Heart right ventricle (tissue), 16 donors: ENCODE measurements at regions of chr4 and their contacts with region 1.

Region 1: DNA sequence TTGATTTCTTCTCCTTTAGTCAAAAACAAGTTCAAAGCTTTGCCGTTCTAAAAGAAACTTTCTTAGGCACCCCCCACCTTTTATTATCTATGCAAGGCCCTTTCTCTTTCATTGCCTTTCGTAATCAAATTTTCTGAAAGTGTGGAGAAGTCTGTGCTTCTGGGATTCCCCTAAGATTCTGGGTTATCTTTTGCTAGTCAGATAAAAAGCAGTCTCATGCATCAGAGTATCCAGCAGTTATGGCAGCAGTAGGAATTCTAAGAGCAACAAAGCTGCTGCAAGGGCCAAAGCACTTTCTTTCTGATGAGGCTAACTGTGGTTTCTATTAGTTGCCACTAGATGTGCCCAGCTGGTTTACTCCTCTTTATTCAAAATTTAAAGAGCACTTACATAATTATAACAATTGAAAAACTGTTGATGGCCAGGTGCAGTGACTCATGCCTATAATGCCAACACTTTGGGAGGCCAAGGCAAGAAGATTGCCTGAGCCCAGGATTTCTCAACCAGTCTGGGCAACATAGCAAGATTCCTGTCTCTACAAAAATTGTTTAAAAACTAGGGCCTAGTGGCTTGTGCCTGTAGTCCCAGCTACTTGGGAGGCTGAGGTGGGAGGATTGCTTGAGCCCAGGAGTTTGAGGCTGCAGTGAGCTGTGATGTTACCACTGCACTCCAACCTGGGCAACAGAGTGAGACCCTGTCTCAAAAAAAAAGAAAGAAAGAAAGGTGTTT is 296.2 kb downstream of the PAPSS1 start:
- DNase-seq: no peak
- ATAC-seq: no peak
- H3K4me3 ChIP-seq: no peak overlapping the region
- H3K27ac ChIP-seq: no peak overlapping the region
- H3K4me1 ChIP-seq: no peaks in the 10 kb centered on the region
- H3K27me3 ChIP-seq: no peaks in the 10 kb centered on the region
- CTCF ChIP-seq: no peak

Region 2: GRCh38 chr4:107006218-107006617 is 417.6 kb before region 1 on chr4:
- intact Hi-C with region 1: no loop called
- DNase-seq: no peak
- ATAC-seq: no peak
- H3K4me3 ChIP-seq: no peak overlapping the region
- H3K27ac ChIP-seq: no peak overlapping the region
- H3K4me1 ChIP-seq: no peaks in the 10 kb centered on the region
- H3K27me3 ChIP-seq: no peaks in the 10 kb centered on the region
- CTCF ChIP-seq: no peak

Region 3: GRCh38 chr4:107843391-107843790 is 419.6 kb after region 1 on chr4:
- intact Hi-C with region 1: loop called in 1 of 10 experiments (anchors 10 kb)
- DNase-seq: no peak
- ATAC-seq: peak in 1 of 8 donors; percentile 57
- H3K4me3 ChIP-seq: no peak overlapping the region
- H3K27ac ChIP-seq: no peak overlapping the region
- H3K4me1 ChIP-seq: peaks cover 0 to 22% (median 3%) of the 10 kb centered on the region in 9 donors
- H3K27me3 ChIP-seq: no peaks in the 10 kb centered on the region
- CTCF ChIP-seq: no peak

Region 4: DNA sequence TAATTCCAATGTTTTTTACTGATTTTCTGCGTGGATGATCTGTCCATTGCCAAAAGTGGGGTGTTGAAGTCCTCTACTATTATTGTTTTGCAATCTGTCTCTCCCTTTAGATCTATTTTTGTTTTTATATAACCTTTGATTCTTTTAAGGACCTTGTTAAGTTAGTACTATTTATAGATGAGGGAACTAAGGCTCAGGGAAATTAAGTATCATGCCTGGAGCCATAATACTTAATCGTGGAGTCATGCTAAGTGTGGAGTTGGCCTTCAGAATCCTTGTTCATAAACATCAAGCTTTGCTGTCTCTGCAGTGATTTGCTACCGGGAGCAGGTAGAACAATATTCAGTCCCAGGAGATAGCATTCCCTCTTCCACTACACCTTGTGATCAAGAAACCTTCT is 431.9 kb after region 1 on chr4:
- intact Hi-C with region 1: no loop called
- DNase-seq: no peak
- ATAC-seq: peak in 2 of 8 donors; percentile 51 to 58
- H3K4me3 ChIP-seq: no peak overlapping the region
- H3K27ac ChIP-seq: peak overlapping the region in 8 of 10 donors; percentile 5 to 90 (median 78)
- H3K4me1 ChIP-seq: peaks cover 3 to 70% (median 40%) of the 10 kb centered on the region in 9 donors
- H3K27me3 ChIP-seq: no peaks in the 10 kb centered on the region
- CTCF ChIP-seq: no peak

Region 5: DNA sequence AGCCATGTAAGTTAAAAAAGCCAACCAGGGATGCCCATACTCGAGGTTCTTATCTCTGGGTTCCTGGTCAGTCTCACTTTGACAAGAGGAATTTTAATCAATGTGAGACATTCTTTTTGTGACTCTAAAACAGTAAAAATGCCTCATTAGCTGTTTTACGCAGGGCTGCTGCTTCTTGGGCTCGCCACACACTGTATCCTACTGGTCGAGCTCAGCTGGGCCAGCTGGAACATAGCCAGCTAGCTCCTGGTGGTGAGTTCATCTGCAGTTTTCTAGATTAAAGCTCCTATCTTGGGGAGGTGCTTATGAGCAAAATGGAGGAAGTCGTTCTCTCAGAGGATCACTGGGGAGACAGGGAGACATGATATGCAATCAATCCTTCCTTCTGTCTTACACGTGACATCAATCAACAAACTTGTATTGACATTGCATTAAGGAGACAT is 800.8 kb after region 1 on chr4:
- intact Hi-C with region 1: no loop called
- DNase-seq: peak in 1 of 2 donors; percentile 9
- ATAC-seq: no peak
- H3K4me3 ChIP-seq: no peak overlapping the region
- H3K27ac ChIP-seq: no peak overlapping the region
- H3K4me1 ChIP-seq: no peaks in the 10 kb centered on the region
- H3K27me3 ChIP-seq: no peaks in the 10 kb centered on the region
- CTCF ChIP-seq: no peak